Activated CD8-positive, alpha-beta T cell treated with anti-CD3 and anti-CD28 coated beads for 36 hours (primary cell): ENCODE measurements at regions of chr11 and their contacts with region 1.

Region 1: DNA sequence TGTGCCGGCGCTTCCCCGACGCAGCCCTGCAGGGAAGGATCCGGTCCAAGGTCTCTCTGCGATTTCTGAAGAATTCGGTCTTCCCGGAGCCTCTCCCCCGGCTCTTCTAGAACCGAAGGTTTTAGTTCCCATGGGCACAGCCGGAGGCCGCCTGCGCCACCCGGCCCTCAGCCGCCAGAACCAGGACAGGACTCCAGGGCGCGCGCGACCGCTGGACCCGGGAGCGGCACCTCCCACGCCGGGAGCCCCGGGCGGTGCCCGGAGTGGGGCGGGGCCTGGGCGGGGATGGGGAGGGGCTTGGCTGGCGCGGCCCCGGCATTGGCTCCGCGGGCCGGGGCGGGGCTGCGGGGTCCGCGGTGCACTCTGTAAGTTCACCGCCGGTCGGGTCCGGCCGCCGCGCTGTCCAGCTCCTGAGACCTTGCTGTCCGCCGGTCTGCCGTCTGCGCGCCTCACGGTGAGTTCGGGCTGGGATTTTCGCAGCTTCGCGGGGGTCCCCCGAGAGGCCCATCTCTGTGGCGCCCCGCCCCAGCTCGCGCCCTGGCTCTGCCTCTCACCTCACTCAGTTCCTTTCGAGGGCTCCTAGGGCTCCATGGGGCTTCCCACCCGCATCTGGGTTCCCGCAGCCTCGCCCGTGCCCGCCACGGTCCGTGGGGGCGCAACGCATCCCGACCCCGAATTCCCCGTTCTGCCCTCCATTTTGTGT is at the start of gene CDC42EP2:
- DNase-seq: peak; percentile 73
- ATAC-seq: peak; percentile 91
- H3K4me3 Mint-ChIP-seq: peak within 1 kb of the TSS; percentile 74
- H3K27ac Mint-ChIP-seq: no peak within 1 kb of the TSS
- H3K4me1 Mint-ChIP-seq: peaks cover 4% of the 10 kb centered on the region
- H3K27me3 Mint-ChIP-seq: peaks cover 9% of the 10 kb centered on the region
- CTCF ChIP-seq: no peak
- total RNA-seq, gene CDC42EP2: 1.2 TPM in 1 of 2 experiments, not detected in the other

Region 2: GRCh38 chr11:65194564-65194963 is 120.1 kb before region 1 on chr11:
- CTCF ChIA-PET with region 1: interaction called, 10 read pairs
- POLR2A ChIA-PET with region 1: no interaction called
- intact Hi-C with region 1: no loop called
- DNase-seq: no peak
- ATAC-seq: no peak
- H3K4me3 Mint-ChIP-seq: no peak overlapping the region
- H3K27ac Mint-ChIP-seq: no peak overlapping the region
- H3K4me1 Mint-ChIP-seq: no peaks in the 10 kb centered on the region
- H3K27me3 Mint-ChIP-seq: no peaks in the 10 kb centered on the region
- CTCF ChIP-seq: no peak

Region 3: GRCh38 chr11:65225279-65226102 is 89.2 kb before region 1 on chr11:
- CTCF ChIA-PET with region 1: interaction called, 55 read pairs
- POLR2A ChIA-PET with region 1: interaction called, 5 read pairs
- intact Hi-C with region 1: loop called (anchors 10 kb)
- DNase-seq: peak; percentile 76
- ATAC-seq: peak; percentile 85
- H3K4me3 Mint-ChIP-seq: peak overlapping the region; percentile 72
- H3K27ac Mint-ChIP-seq: no peak overlapping the region
- H3K4me1 Mint-ChIP-seq: peaks cover 7% of the 10 kb centered on the region
- H3K27me3 Mint-ChIP-seq: peaks cover 19% of the 10 kb centered on the region
- CTCF ChIP-seq: peak; percentile 58

Region 4: GRCh38 chr11:65261591-65262380 is 52.9 kb before region 1 on chr11 and contains the start of gene POLA2:
- CTCF ChIA-PET with region 1: interaction called, 31 read pairs
- POLR2A ChIA-PET with region 1: interaction called, 6 read pairs
- intact Hi-C with region 1: no loop called
- DNase-seq: peak; percentile 95
- ATAC-seq: peak; percentile 86
- H3K4me3 Mint-ChIP-seq: peak within 1 kb of the TSS; percentile 91
- H3K27ac Mint-ChIP-seq: peak within 1 kb of the TSS; percentile 95
- H3K4me1 Mint-ChIP-seq: peaks cover 35% of the 10 kb centered on the region
- H3K27me3 Mint-ChIP-seq: no peaks in the 10 kb centered on the region
- CTCF ChIP-seq: no peak
- total RNA-seq, gene POLA2: 55.2 to 63.8 TPM

Region 5: DNA sequence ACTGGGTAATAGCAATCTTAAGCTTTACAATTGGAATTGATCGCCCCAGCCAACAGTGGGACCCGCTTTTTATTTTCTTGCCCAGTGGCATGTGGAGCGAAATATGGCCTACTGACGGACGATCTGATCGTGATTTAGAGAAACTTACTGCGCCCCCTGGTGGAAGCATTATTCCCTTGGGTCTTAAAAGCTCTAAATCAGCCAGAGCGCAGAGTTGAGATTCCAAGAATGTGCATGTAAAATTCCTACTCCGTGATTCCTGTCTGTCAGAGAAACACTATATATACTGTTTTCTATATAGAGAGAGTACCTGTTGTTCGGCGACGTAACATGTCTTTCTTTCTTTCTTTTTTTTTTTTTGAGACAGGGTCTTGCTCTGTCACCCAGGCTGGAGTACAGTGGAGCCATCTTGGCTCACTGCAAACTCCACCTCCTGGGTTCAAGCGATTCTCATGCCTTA is 15.3 kb after region 1 on chr11:
- CTCF ChIA-PET with region 1: interaction called, 265 read pairs
- POLR2A ChIA-PET with region 1: interaction called, 7 read pairs
- intact Hi-C with region 1: no loop called
- DNase-seq: peak; percentile 97
- ATAC-seq: peak; percentile 24
- H3K4me3 Mint-ChIP-seq: peak overlapping the region; percentile 3
- H3K27ac Mint-ChIP-seq: no peak overlapping the region
- H3K4me1 Mint-ChIP-seq: peaks cover 12% of the 10 kb centered on the region
- H3K27me3 Mint-ChIP-seq: no peaks in the 10 kb centered on the region
- CTCF ChIP-seq: peak; percentile 92